Calu3 (cell line): ENCODE measurements at regions of chr7 and their contacts with region 1.

Region 1: DNA sequence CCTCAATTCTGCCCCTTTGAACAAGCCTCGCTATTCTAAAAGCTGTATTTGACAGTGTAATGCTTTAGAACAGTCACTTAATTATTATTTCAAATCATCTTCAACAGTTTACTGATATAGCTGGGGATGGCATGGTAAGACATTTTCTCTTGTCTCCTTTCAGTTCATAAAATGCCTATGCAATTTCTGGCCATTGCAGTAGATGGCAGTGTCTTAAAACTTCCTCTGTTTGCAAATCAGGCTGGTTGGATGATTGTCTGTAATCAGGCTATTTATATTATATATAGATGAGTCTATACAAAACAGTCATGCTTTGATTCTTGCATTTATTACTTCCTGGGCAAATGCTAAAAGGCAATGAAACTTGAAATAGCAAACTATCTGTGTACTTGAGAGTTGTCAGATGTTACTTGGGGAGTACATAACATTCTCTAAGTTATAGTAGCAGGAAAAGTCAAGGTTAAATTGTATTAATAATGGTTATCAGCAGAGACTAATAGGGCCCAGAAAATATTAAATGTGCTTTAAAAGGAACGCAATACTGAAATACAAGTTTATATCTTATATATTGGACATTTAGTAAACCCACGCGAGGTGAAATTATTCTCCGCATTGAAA is 55.5 kb upstream of the LHFPL3 start:
- DNase-seq: peak; percentile 9
- H3K4me3 Mint-ChIP-seq: no peak overlapping the region
- H3K27ac Mint-ChIP-seq: no peak overlapping the region
- H3K4me1 Mint-ChIP-seq: no peaks in the 10 kb centered on the region
- H3K27me3 Mint-ChIP-seq: peaks cover 28% of the 10 kb centered on the region
- CTCF ChIP-seq: peak; percentile 29

Region 2: GRCh38 chr7:104415700-104416099 is 142.8 kb after region 1 on chr7:
- CTCF ChIA-PET with region 1: no interaction called
- intact Hi-C with region 1: loop called (anchors 10 kb)
- DNase-seq: no peak
- H3K4me3 Mint-ChIP-seq: no peak overlapping the region
- H3K27ac Mint-ChIP-seq: no peak overlapping the region
- H3K4me1 Mint-ChIP-seq: no peaks in the 10 kb centered on the region
- H3K27me3 Mint-ChIP-seq: no peaks in the 10 kb centered on the region
- CTCF ChIP-seq: no peak

Region 3: GRCh38 chr7:104548868-104549267 is 276.0 kb after region 1 on chr7:
- CTCF ChIA-PET with region 1: no interaction called
- intact Hi-C with region 1: loop called (anchors 5 kb)
- DNase-seq: no peak
- H3K4me3 Mint-ChIP-seq: no peak overlapping the region
- H3K27ac Mint-ChIP-seq: no peak overlapping the region
- H3K4me1 Mint-ChIP-seq: no peaks in the 10 kb centered on the region
- H3K27me3 Mint-ChIP-seq: peaks cover 23% of the 10 kb centered on the region
- CTCF ChIP-seq: no peak